ENCODE measurements at regions of chr3 and their contacts with region 1.

Region 1: GRCh38 chr3:188719545-188719944 is 452.2 kb upstream of the TPRG1 start:
- DNase-seq: no peak
- H3K4me3 ChIP-seq: no peak overlapping the region
- H3K27ac ChIP-seq: no peak overlapping the region
- H3K4me1 ChIP-seq: peaks cover 0 to 18% (median 5%) of the 10 kb centered on the region in 4 donors
- H3K27me3 ChIP-seq: no peaks in the 10 kb centered on the region
- CTCF ChIP-seq: no peak
- EP300 ChIP-seq: no peak
- POLR2A ChIP-seq: no peak

Region 2: GRCh38 chr3:188036375-188037215 is 683.0 kb before region 1 on chr3:
- in situ Hi-C with region 1: no loop called
- intact Hi-C with region 1: no loop called
- DNase-seq: no peak
- H3K4me3 ChIP-seq: no peak overlapping the region
- H3K27ac ChIP-seq: peak overlapping the region in 1 of 4 donors; percentile 1
- H3K4me1 ChIP-seq: peaks cover 0 to 16% (median 14%) of the 10 kb centered on the region in 4 donors
- H3K27me3 ChIP-seq: no peaks in the 10 kb centered on the region
- CTCF ChIP-seq: no peak
- EP300 ChIP-seq: no peak
- POLR2A ChIP-seq: no peak

Region 3: DNA sequence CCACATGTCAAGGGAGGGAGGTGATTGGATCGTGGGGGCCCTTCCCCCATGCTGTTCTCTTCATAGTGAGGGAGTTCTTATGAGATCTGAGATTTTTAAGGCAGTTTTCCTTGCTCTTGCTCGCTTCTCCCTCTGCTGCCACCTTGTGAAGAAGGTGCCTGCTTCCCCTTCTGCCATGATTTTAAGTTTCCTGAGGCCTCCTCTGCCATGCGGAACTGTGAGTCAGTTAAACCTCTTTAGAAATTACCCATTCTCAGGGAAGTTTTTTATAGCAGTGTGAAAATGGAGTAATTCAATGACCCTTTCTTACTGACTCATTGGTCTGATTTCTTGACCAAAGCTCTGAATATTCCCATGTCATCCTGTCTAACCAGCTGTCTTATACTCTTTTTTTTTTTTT is 32.2 kb before region 1 on chr3:
- in situ Hi-C with region 1: no loop called
- intact Hi-C with region 1: loop called (anchors 1 kb)
- DNase-seq: no peak
- H3K4me3 ChIP-seq: no peak overlapping the region
- H3K27ac ChIP-seq: no peak overlapping the region
- H3K4me1 ChIP-seq: peaks cover 0 to 34% (median 14%) of the 10 kb centered on the region in 4 donors
- H3K27me3 ChIP-seq: no peaks in the 10 kb centered on the region
- CTCF ChIP-seq: no peak
- EP300 ChIP-seq: no peak
- POLR2A ChIP-seq: no peak

Region 4: GRCh38 chr3:188993181-188993580 is 273.6 kb after region 1 on chr3:
- in situ Hi-C with region 1: no loop called
- intact Hi-C with region 1: no loop called
- DNase-seq: no peak
- H3K4me3 ChIP-seq: no peak overlapping the region
- H3K27ac ChIP-seq: no peak overlapping the region
- H3K4me1 ChIP-seq: no peaks in the 10 kb centered on the region
- H3K27me3 ChIP-seq: no peaks in the 10 kb centered on the region
- CTCF ChIP-seq: no peak
- EP300 ChIP-seq: no peak
- POLR2A ChIP-seq: no peak

Region 5: GRCh38 chr3:189108067-189108466 is 388.5 kb after region 1 on chr3:
- in situ Hi-C with region 1: no loop called
- intact Hi-C with region 1: no loop called
- DNase-seq: no peak
- H3K4me3 ChIP-seq: no peak overlapping the region
- H3K27ac ChIP-seq: no peak overlapping the region
- H3K4me1 ChIP-seq: no peaks in the 10 kb centered on the region
- H3K27me3 ChIP-seq: no peaks in the 10 kb centered on the region
- CTCF ChIP-seq: no peak
- EP300 ChIP-seq: no peak
- POLR2A ChIP-seq: no peak

Measured in transverse colon (tissue), 4 donors.